Left ventricle myocardium inferior (tissue), 1 donor: ENCODE measurements at regions of chr3 and their contacts with region 1.

Region 1: GRCh38 chr3:130892759-130893375 is 1.0 kb upstream of the ATP2C1 start:
- DNase-seq: peak; percentile 20
- H3K4me3 ChIP-seq: peak overlapping the region; percentile 93
- H3K27ac ChIP-seq: peak overlapping the region; percentile 98
- H3K4me1 ChIP-seq: peaks cover 56% of the 10 kb centered on the region
- H3K27me3 ChIP-seq: no peaks in the 10 kb centered on the region
- CTCF ChIP-seq: peak; percentile 86

Region 2: DNA sequence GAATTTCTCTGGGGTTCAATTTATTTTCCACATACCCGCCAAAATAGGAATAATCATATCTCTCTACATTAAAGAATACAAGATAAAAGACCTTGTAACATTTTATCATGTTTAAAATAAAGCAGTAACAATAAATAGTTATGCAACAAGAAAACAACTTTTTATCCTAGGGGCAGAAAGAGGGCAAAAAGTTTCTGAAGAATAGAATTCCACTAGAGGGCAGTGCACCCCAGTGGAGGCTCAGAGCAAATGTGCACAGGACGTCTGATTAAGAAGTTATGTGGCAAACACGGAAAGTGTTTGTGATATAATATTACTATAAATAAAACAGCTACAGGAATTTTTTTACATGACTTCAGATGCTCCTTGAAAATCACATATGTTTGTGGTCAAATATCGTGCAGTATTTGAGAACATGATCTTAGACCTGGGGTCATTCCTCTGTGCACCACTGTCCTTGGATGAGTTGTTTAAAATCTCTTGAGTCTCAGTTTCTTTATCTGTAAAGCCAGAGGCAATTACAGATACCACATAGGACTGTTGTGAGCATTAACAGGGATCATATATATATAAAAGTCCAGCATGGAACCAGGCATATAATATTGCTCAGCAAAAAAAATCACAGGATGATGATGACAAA is 133.0 kb before region 1 on chr3:
- intact Hi-C with region 1: loop called (anchors 5 kb)
- DNase-seq: no peak
- H3K4me3 ChIP-seq: no peak overlapping the region
- H3K27ac ChIP-seq: no peak overlapping the region
- H3K4me1 ChIP-seq: peaks cover 4% of the 10 kb centered on the region
- H3K27me3 ChIP-seq: no peaks in the 10 kb centered on the region
- CTCF ChIP-seq: peak; percentile 88